Naive thymus-derived CD8-positive, alpha-beta T cell (primary cell): ENCODE measurements at regions of chr1 and their contacts with region 1.

Region 1: DNA sequence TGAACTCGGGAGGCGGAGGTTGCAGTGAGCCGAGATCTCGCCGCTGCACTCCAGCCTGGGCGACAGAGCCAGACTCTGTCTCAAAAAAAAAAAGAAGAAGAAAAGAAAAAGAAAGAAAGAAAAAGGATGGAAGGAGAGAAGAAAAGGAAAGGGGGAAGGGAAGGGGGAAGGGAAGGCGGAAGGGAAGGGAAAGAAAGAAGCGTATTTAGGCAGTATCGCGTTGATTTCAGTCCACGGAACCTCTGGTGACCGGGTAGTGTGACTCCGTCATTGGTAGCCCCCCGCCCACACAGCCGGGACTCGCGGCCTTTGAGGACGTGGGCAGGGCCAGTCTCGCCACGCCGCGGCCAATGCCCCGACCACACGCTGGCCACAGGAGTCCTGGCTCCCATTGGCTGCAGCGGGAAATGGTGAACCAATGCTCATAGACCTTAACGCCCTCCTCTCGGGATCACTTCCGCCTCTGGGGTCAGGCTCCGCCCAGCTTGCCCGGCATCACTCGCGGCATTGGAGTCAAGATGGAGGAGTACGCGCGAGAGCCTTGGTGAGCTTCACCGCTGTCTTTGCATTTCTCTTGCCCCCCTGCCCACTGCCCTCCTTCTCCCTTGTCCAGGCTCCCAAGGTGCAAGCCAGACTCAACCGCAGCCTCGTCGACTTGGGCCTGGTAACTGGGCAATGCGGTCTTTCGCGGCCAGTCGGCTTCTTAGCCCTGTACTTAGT is at the start of gene TIMM17A:
- DNase-seq: peak; percentile 78 to 95 (median 90)
- ATAC-seq: peak; percentile 98 to 99
- H3K4me3 Mint-ChIP-seq: peak within 1 kb of the TSS; percentile 85 to 99 (median 98)
- H3K27ac Mint-ChIP-seq: peak within 1 kb of the TSS; percentile 96 to 99 (median 98)
- H3K4me1 Mint-ChIP-seq: peaks cover 6 to 30% (median 26%) of the 10 kb centered on the region in 4 donors
- H3K27me3 Mint-ChIP-seq: no peaks in the 10 kb centered on the region
- polyA plus RNA-seq, gene TIMM17A: 15.5 to 25.3 (median 17.8) TPM

Region 2: DNA sequence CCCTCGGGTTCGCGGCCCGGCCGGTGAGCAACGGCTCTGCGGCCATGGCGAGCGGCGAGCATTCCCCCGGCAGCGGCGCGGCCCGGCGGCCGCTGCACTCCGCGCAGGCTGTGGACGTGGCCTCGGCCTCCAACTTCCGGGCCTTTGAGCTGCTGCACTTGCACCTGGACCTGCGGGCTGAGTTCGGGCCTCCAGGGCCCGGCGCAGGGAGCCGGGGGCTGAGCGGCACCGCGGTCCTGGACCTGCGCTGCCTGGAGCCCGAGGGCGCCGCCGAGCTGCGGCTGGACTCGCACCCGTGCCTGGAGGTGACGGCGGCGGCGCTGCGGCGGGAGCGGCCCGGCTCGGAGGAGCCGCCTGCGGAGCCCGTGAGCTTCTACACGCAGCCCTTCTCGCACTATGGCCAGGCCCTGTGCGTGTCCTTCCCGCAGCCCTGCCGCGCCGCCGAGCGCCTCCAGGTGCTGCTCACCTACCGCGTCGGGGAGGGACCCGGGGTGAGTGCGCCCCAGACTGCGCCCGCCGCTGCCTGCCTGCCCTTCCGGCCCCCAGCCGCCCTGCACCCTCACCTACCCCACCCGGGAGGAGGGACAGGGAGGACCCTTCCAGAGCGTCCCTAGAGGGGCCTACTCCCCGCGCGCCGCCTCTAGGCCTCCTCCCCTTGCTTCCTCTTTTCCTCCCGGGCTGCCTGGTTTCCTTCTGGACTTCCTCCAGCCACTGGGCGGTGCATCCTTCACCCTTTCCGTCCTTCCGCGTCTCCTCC is 27.6 kb after region 1 on chr1 and contains the start of gene RNPEP:
- POLR2A ChIA-PET with region 1: interaction called, 20 read pairs
- DNase-seq: peak; percentile 49 to 75 (median 56)
- ATAC-seq: peak; percentile 86 to 87
- H3K4me3 Mint-ChIP-seq: peak within 1 kb of the TSS; percentile 91 to 100 (median 96)
- H3K27ac Mint-ChIP-seq: peak within 1 kb of the TSS; percentile 92 to 98 (median 96)
- H3K4me1 Mint-ChIP-seq: peaks cover 21 to 32% (median 26%) of the 10 kb centered on the region in 4 donors
- H3K27me3 Mint-ChIP-seq: no peaks in the 10 kb centered on the region
- polyA plus RNA-seq, gene RNPEP: 24.1 to 33.2 (median 28.1) TPM